ENCODE measurements at regions of chr14 and their contacts with region 1.

Region 1: DNA sequence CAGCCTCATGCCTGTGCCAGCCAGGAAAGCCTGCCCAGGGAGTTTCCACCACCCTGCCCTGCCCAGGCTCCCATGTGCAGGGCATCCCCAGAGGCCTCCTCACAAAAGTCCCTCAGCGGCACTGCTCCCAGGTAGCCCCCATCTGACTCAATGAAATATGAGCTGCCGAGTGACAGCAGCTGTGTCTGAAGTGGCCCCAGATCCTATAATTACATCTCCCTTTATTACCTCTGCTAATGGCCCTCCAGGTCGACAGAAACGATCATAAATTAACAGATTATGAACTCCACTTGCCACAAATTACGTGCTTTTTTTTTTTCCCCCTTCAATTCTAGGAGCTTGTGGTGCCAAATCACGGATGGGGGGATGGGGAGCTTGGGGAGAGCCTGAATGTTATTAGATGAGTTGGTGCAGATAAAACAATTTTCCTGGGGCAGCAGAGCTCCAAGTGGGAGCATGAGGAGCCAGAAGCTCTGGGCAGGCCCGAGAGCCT is 110.4 kb downstream of the ESRRB start:
- DNase-seq: peak; percentile 73
- H3K4me3 ChIP-seq: no peak overlapping the region
- H3K27ac ChIP-seq: peak overlapping the region in 1 of 2 experiments; percentile 80; a peak in 2 of 4 replicates
- H3K4me1 ChIP-seq: peaks cover 0 to 47% of the 10 kb centered on the region in 2 experiments; a peak in 1 of 4 replicates
- H3K27me3 ChIP-seq: no peaks in the 10 kb centered on the region
- CTCF ChIP-seq: no peak
- EP300 ChIP-seq: peak in 1 of 2 experiments; percentile 95; a peak in 2 of 4 replicates
- RAD21 ChIP-seq: peak; percentile 7; the same call in 1 of the 2 replicates

Region 2: DNA sequence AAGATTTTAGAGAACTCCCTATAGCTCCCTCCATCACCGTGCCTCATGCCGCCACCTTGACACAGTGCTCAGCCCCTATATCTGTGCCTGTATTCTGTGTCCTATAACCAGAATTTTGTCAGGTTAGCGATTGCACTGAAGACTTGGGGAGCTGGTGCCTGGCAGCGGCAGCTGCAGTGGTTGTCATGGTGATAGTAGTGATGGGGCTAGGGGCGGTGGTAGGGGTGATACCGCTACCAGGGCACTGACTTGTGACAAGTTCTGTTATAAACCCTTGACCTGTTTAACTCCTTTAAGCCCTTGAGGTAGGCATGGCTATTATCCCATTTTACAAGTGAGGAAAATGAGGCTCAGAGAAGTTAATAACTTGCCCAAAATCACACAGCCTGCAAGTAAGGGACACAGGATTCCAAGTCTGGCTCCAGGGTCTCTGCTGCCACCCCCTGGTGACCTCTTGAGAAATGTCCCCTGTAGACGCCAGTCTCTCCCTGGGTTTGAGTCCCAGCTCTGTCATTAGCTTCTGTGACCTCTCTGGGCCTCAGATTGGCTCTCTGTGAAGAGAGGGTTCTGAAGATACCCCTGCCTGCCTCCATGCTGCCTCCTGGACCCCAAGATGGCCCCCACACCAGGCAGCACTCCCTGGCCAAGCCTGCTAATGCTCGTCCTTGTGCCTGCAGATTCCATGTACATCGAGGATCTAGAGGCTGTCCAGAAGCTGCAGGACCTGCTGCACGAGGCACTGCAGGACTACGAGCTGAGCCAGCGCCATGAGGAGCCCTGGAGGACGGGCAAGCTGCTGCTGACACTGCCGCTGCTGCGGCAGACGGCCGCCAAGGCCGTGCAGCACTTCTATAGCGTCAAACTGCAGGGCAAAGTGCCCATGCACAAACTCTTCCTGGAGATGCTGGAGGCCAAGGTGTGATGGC is 11.5 kb after region 1 on chr14:
- CTCF ChIA-PET with region 1: interaction called, 47 read pairs
- POLR2A ChIA-PET with region 1: no interaction called
- DNase-seq: peak; percentile 76
- H3K4me3 ChIP-seq: no peak overlapping the region; a peak in 1 of 4 replicates
- H3K27ac ChIP-seq: no peak overlapping the region
- H3K4me1 ChIP-seq: peaks cover 5 to 22% of the 10 kb centered on the region in 2 experiments; a peak in 2 of 4 replicates
- H3K27me3 ChIP-seq: no peaks in the 10 kb centered on the region
- CTCF ChIP-seq: no peak
- EP300 ChIP-seq: no peak
- RAD21 ChIP-seq: peak; percentile 73

Region 3: GRCh38 chr14:76647697-76648298 is 161.5 kb after region 1 on chr14:
- CTCF ChIA-PET with region 1: interaction called, 11 read pairs
- POLR2A ChIA-PET with region 1: no interaction called
- DNase-seq: peak; percentile 62
- H3K4me3 ChIP-seq: no peak overlapping the region
- H3K27ac ChIP-seq: no peak overlapping the region
- H3K4me1 ChIP-seq: peaks cover 0 to 9% of the 10 kb centered on the region in 2 experiments; a peak in 1 of 4 replicates
- H3K27me3 ChIP-seq: no peaks in the 10 kb centered on the region
- CTCF ChIP-seq: peak; percentile 83
- EP300 ChIP-seq: no peak
- RAD21 ChIP-seq: peak; percentile 78

Measured in SK-N-SH (cell line).